B cell (primary cell): ENCODE measurements at regions of chr19 and their contacts with region 1.

Region 1: GRCh38 chr19:5904352-5905113 is at the start of gene VMAC:
- DNase-seq: peak; percentile 100
- ATAC-seq: peak; percentile 77
- H3K4me3 ChIP-seq: peak within 1 kb of the TSS; percentile 86 to 99 (median 98)
- H3K4me3 Mint-ChIP-seq: peak within 1 kb of the TSS; percentile 92
- H3K27ac ChIP-seq: peak within 1 kb of the TSS; percentile 79 to 85
- H3K27ac Mint-ChIP-seq: peak within 1 kb of the TSS; percentile 96
- H3K4me1 ChIP-seq: peaks cover 11 to 25% of the 10 kb centered on the region in 2 donors
- H3K4me1 Mint-ChIP-seq: peaks cover 38% of the 10 kb centered on the region
- H3K27me3 ChIP-seq: no peaks in the 10 kb centered on the region
- H3K27me3 Mint-ChIP-seq: no peaks in the 10 kb centered on the region
- CTCF ChIP-seq: no peak
- total RNA-seq, gene VMAC: 27.1 and 27.8 TPM in 2 replicates

Region 2: GRCh38 chr19:4968462-4969291 is 935.9 kb before region 1 on chr19 and contains the start of gene KDM4B:
- CTCF ChIA-PET with region 1: no interaction called
- POLR2A ChIA-PET with region 1: no interaction called
- intact Hi-C with region 1: loop called (anchors 5 kb)
- DNase-seq: peak; percentile 100
- ATAC-seq: peak; percentile 89
- H3K4me3 ChIP-seq: peak within 1 kb of the TSS; percentile 41 to 67 (median 56)
- H3K4me3 Mint-ChIP-seq: peak within 1 kb of the TSS; percentile 89
- H3K27ac ChIP-seq: peak within 1 kb of the TSS; percentile 56 to 58
- H3K27ac Mint-ChIP-seq: peak within 1 kb of the TSS; percentile 92
- H3K4me1 ChIP-seq: peaks cover 27 to 34% of the 10 kb centered on the region in 2 donors
- H3K4me1 Mint-ChIP-seq: peaks cover 30% of the 10 kb centered on the region
- H3K27me3 ChIP-seq: no peaks in the 10 kb centered on the region
- H3K27me3 Mint-ChIP-seq: no peaks in the 10 kb centered on the region
- CTCF ChIP-seq: no peak
- total RNA-seq, gene KDM4B: 202 and 205 TPM in 2 replicates

Region 3: DNA sequence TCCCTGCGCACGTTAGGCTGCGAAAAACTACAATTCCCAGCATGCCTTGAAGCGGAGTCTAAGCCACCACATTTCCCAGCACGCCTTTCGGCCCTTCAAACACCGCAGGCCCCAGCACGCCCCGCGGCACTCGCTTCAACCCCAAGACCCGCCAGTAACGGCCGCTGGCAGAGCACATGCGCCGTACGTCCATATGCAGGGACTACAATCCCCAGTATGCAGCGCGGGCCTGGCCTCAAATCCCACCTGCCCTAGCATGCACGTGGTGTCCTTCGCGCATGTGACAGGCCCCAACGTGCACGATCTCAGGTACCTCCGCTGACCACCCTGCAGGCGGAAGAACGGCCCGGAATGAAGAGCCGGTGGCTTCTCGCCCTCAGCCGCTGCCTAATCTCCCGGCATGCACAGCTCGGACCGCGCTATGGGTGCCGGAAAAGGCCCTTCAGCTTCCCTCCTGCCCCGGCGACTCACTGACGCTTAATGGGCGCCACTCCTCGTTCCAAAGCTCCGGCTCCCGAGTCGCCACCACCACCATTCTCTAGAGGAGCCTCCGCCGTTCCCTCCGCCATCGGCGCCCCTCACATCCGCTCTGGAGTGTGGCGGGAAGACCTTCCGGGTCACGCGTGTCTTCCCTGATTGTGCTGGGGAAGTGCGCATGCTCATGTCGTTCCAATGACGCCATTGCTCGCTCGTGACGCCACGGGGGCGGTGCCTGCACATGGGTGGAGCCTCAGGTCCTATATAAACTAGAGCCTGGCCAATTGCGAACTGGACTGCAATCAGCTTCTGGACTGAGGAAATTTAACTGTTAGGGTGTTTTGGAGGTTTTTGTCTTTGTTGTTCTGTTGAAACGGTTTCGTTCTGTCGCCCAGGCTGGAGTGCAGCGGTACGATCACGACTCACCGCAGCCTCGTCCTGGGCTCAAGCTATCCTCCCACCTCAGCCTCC is 113.7 kb before region 1 on chr19 and contains the start of gene DUS3L:
- CTCF ChIA-PET with region 1: no interaction called
- POLR2A ChIA-PET with region 1: interaction called, 3 read pairs
- intact Hi-C with region 1: loop called (anchors 1 kb)
- DNase-seq: peak; percentile 97
- ATAC-seq: peak; percentile 92
- H3K4me3 ChIP-seq: peak within 1 kb of the TSS; percentile 67 to 91 (median 87)
- H3K4me3 Mint-ChIP-seq: peak within 1 kb of the TSS; percentile 98
- H3K27ac ChIP-seq: peak within 1 kb of the TSS; percentile 97 to 98
- H3K27ac Mint-ChIP-seq: peak within 1 kb of the TSS; percentile 100
- H3K4me1 ChIP-seq: peaks cover 5 to 16% of the 10 kb centered on the region in 2 donors
- H3K4me1 Mint-ChIP-seq: peaks cover 10% of the 10 kb centered on the region
- H3K27me3 ChIP-seq: peaks cover 0 to 6% (median 0%) of the 10 kb centered on the region in 4 experiments
- H3K27me3 Mint-ChIP-seq: no peaks in the 10 kb centered on the region
- CTCF ChIP-seq: no peak
- total RNA-seq, gene DUS3L: 79.0 and 84.6 TPM in 2 replicates

Region 4: DNA sequence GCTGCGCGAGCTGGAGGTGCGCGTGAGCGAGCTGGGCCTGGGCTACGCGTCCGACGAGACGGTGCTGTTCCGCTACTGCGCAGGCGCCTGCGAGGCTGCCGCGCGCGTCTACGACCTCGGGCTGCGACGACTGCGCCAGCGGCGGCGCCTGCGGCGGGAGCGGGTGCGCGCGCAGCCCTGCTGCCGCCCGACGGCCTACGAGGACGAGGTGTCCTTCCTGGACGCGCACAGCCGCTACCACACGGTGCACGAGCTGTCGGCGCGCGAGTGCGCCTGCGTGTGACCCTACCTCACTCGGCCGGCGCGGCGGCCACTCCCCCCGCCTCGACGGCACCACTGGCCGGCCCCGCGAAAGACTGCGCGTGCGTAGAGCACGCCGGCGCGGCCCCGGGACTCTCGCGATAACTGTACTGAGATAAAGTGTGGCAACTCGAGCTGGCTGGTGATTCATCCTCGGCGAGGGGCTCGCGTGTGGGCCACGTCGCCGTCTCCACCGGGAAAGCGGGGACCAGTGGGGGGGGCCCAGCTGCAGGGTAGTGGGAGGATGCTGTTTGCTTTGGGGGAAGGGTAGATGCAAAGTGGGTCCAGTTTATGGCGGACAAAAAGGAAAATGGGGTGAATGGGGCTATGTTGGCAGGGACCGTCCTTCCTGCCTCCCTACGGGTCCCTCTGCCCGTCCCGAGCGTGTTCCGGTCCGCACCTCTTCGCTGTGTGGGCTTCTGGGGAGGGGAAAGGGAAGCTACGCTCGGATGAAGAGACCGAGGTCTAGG is 76.5 kb before region 1 on chr19:
- CTCF ChIA-PET with region 1: no interaction called
- POLR2A ChIA-PET with region 1: interaction called, 9 read pairs
- intact Hi-C with region 1: loop called (anchors 1 kb)
- DNase-seq: peak; percentile 91
- ATAC-seq: peak; percentile 79
- H3K4me3 ChIP-seq: peak overlapping the region; percentile 36 to 75 (median 59)
- H3K4me3 Mint-ChIP-seq: peak overlapping the region; percentile 92
- H3K27ac ChIP-seq: peak overlapping the region; percentile 34 to 67
- H3K27ac Mint-ChIP-seq: peak overlapping the region; percentile 93
- H3K4me1 ChIP-seq: peaks cover 16 to 30% of the 10 kb centered on the region in 2 donors
- H3K4me1 Mint-ChIP-seq: peaks cover 19% of the 10 kb centered on the region
- H3K27me3 ChIP-seq: peaks cover 0 to 28% (median 7%) of the 10 kb centered on the region in 4 experiments
- H3K27me3 Mint-ChIP-seq: peaks cover 4% of the 10 kb centered on the region
- CTCF ChIP-seq: no peak

Region 5: GRCh38 chr19:6164906-6165531 is 260.5 kb after region 1 on chr19:
- CTCF ChIA-PET with region 1: no interaction called
- POLR2A ChIA-PET with region 1: no interaction called
- intact Hi-C with region 1: no loop called
- DNase-seq: no peak
- ATAC-seq: no peak
- H3K4me3 ChIP-seq: no peak overlapping the region
- H3K4me3 Mint-ChIP-seq: no peak overlapping the region
- H3K27ac ChIP-seq: no peak overlapping the region
- H3K27ac Mint-ChIP-seq: no peak overlapping the region
- H3K4me1 ChIP-seq: peaks cover 6 to 10% of the 10 kb centered on the region in 2 donors
- H3K4me1 Mint-ChIP-seq: peaks cover 7% of the 10 kb centered on the region
- H3K27me3 ChIP-seq: peaks cover 0 to 5% (median 0%) of the 10 kb centered on the region in 4 experiments
- H3K27me3 Mint-ChIP-seq: no peaks in the 10 kb centered on the region
- CTCF ChIP-seq: no peak

Region 6: DNA sequence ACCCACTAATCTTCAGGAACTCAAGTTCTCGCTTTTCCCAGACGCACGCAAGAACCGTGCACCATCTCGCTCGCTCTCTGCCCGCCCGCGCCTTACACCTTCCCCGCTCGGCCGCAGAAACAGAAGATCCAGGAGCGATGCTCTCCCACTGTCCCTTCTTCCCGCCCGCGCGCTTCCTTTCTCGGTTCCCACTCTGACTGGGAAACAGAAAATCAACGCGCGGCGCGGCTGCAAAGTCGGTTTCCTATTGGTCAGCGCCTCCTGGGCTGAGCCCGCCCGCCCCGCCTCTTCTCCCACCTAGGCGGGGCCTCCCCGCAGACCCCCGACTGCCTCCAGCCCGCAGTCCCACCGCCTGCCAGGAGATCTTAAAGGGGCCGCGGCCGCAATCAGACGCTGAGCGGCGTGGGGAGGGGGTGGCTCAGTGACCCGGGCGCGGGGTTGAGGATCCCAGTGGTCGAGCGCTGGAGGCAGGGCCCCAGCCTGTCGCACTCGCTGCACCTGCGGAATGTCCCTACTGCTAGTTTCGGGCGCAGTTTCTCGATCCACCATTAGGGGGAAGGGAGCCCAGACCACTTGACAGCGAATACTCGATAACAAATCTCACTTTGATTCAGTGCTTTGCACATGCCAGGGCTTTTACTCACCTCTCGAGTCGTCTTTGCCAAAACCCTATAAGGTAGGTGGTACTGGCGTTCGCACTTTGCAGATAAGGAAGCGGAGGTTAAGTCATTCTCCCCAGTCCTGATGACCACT is 555.7 kb after region 1 on chr19:
- CTCF ChIA-PET with region 1: no interaction called
- POLR2A ChIA-PET with region 1: interaction called, 6 read pairs
- intact Hi-C with region 1: loop called (anchors 2 kb)
- DNase-seq: peak; percentile 99
- ATAC-seq: peak; percentile 84
- H3K4me3 ChIP-seq: peak overlapping the region; percentile 60 to 93 (median 78)
- H3K4me3 Mint-ChIP-seq: peak overlapping the region; percentile 91
- H3K27ac ChIP-seq: peak overlapping the region; percentile 76 to 86
- H3K27ac Mint-ChIP-seq: peak overlapping the region; percentile 78
- H3K4me1 ChIP-seq: peaks cover 11 to 34% of the 10 kb centered on the region in 2 donors
- H3K4me1 Mint-ChIP-seq: peaks cover 32% of the 10 kb centered on the region
- H3K27me3 ChIP-seq: peaks cover 0 to 15% (median 6%) of the 10 kb centered on the region in 4 experiments
- H3K27me3 Mint-ChIP-seq: no peaks in the 10 kb centered on the region
- CTCF ChIP-seq: peak; percentile 78